B cell (primary cell): ENCODE measurements at regions of chr9 and their contacts with region 1.

Region 1: DNA sequence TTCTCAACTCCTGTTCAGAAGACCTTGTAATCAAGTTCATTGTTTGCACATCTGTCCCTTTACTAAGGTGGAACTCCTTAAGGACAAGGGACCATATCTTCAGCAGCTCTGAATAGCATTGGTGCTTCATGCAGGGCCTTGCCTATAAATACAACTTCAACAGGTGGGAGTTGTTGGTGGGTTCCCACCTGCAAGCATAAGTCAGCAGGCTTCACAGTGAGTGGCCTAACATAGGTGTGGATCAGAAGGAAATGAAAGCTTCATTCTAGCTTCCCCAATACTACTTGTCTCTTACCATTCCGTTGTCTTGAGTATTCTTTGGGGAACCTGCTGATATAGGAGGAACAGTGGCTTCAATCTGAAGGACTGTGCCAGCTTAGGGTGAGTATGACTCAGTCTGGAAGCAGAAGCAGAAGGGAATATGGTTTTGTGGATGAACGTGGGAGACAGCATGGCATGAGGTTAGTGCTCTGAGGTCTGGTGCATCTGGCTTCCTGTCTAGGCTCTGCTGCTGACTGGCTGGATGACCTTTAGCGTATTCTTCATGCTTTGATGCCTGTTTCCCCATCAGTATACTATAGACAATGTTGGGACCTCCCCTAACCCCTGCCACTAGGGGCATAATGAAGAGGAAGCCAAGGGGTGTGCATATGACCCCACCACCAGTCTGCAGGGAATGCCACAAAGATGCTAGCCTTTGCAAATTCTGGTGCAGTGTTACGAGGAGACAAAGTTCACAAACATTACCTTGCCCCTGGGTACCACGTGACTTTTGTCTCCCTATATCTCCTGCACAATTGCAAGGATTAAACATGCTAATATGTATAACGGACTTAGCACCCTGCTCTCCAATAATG is 192.3 kb downstream of the PALM2AKAP2 start:
- DNase-seq: peak; percentile 85
- ATAC-seq: peak; percentile 73
- H3K4me3 ChIP-seq: peak overlapping the region in 1 of 5 experiments; percentile 13
- H3K4me3 Mint-ChIP-seq: peak overlapping the region; percentile 76
- H3K27ac ChIP-seq: peak overlapping the region; percentile 90 to 93
- H3K27ac Mint-ChIP-seq: peak overlapping the region; percentile 98
- H3K4me1 ChIP-seq: peaks cover 99 to 100% of the 10 kb centered on the region in 2 donors
- H3K4me1 Mint-ChIP-seq: peaks cover 95% of the 10 kb centered on the region
- H3K27me3 ChIP-seq: no peaks in the 10 kb centered on the region
- H3K27me3 Mint-ChIP-seq: no peaks in the 10 kb centered on the region
- CTCF ChIP-seq: peak; percentile 68

Region 2: DNA sequence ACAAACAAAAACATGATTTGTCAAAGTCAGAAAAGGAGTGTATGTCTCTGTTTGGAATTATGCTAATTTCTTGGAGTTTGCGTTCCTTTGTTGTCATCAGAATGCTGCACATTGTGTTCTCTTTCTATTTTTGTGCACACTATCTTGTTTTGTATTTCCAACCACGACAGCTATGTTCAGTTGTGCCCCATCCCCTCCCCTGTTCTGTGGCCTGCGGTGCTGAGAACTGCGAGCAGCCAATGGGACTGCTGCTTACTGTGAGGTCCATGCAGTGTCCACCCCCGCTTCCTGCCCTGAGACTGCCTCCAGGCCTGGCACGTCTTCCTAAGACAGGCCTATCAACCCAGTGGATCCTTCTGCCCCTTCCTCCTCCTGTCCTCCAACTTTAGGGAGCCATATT is 115.5 kb before region 1 on chr9:
- CTCF ChIA-PET with region 1: no interaction called
- POLR2A ChIA-PET with region 1: no interaction called
- intact Hi-C with region 1: no loop called
- DNase-seq: no peak
- ATAC-seq: no peak
- H3K4me3 ChIP-seq: no peak overlapping the region
- H3K4me3 Mint-ChIP-seq: no peak overlapping the region
- H3K27ac ChIP-seq: no peak overlapping the region
- H3K27ac Mint-ChIP-seq: no peak overlapping the region
- H3K4me1 ChIP-seq: no peaks in the 10 kb centered on the region
- H3K4me1 Mint-ChIP-seq: no peaks in the 10 kb centered on the region
- H3K27me3 ChIP-seq: peaks cover 0 to 4% (median 0%) of the 10 kb centered on the region in 4 experiments
- H3K27me3 Mint-ChIP-seq: peaks cover 28% of the 10 kb centered on the region
- CTCF ChIP-seq: no peak

Region 3: GRCh38 chr9:109908459-109909390 is 63.5 kb before region 1 on chr9:
- CTCF ChIA-PET with region 1: interaction called, 138 read pairs
- POLR2A ChIA-PET with region 1: interaction called, 28 read pairs
- intact Hi-C with region 1: loop called (anchors 1 kb)
- DNase-seq: peak; percentile 60
- ATAC-seq: peak; percentile 61
- H3K4me3 ChIP-seq: no peak overlapping the region
- H3K4me3 Mint-ChIP-seq: no peak overlapping the region
- H3K27ac ChIP-seq: peak overlapping the region; percentile 65 to 69
- H3K27ac Mint-ChIP-seq: no peak overlapping the region
- H3K4me1 ChIP-seq: peaks cover 75 to 81% of the 10 kb centered on the region in 2 donors
- H3K4me1 Mint-ChIP-seq: peaks cover 7% of the 10 kb centered on the region
- H3K27me3 ChIP-seq: no peaks in the 10 kb centered on the region
- H3K27me3 Mint-ChIP-seq: no peaks in the 10 kb centered on the region
- CTCF ChIP-seq: no peak

Region 4: DNA sequence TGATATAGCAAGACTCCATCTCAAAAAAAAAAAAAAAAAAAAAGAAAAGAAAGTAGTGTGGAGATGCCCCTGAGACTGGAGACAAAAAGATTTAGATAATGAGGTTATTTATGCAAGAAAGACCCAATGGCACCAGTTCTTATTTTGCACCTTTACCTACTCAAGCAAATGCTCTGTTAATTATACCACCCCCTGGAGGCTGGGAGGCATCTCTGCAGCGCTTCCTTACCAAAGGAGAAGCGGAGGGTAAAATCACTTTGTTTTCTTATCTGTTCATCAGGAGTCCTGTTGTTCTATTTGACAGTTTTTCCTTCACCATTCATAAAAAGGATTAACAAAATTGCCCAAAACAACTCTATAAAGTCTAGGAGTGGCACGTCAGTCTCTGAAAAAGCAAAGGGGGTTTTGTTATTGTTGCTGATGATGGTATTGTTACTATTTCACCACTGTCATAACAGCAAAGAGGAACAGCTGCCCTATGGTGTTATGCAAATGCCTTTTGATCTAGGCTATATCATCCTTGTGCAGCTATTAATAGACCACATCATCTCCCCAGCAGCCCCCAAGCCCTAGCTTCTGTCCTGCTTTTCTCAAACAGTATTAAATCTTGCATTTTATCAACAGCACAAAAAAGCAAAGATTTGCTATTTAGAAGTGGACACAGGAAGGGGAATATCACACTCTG is 18.3 kb before region 1 on chr9:
- CTCF ChIA-PET with region 1: interaction called, 31 read pairs
- POLR2A ChIA-PET with region 1: interaction called, 7 read pairs
- intact Hi-C with region 1: loop called (anchors 2 kb)
- DNase-seq: peak; percentile 49
- ATAC-seq: peak; percentile 80
- H3K4me3 ChIP-seq: peak overlapping the region in 1 of 5 experiments; percentile 4
- H3K4me3 Mint-ChIP-seq: peak overlapping the region; percentile 59
- H3K27ac ChIP-seq: peak overlapping the region in 1 of 2 donors; percentile 73
- H3K27ac Mint-ChIP-seq: peak overlapping the region; percentile 86
- H3K4me1 ChIP-seq: peaks cover 38 to 42% of the 10 kb centered on the region in 2 donors
- H3K4me1 Mint-ChIP-seq: peaks cover 58% of the 10 kb centered on the region
- H3K27me3 ChIP-seq: no peaks in the 10 kb centered on the region
- H3K27me3 Mint-ChIP-seq: no peaks in the 10 kb centered on the region
- CTCF ChIP-seq: peak; percentile 57

Region 5: DNA sequence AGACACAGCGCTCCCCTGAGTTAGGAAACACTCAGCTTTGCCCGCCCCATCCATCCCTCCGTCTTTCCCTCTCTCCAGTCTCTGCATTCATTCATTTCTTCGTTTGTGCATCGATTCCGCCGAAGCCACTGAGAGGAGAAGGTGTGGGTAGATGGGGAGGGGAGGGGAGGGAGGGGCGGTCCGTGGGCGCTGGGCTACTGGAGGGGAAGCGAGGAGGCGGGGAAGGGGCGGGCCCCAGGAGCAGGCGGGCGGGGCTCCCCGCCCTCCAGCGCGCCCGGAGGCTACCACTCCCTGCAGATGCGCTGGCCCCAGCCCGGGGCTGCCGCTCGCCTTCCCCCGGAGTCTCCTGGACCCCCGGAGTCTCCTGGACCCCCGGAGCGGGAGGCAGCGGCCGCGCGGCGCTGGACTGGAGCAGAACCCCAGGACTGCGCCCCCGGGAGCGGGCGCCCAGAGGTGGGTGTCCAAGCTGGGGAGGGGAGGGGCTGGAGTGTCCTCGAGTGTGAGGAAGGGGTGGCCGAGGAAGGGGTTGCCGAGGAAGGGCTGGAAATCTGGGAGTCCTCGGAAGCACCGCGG is 76.2 kb after region 1 on chr9:
- CTCF ChIA-PET with region 1: interaction called, 17 read pairs
- POLR2A ChIA-PET with region 1: interaction called, 23 read pairs
- intact Hi-C with region 1: loop called (anchors 1 kb)
- DNase-seq: peak; percentile 91
- ATAC-seq: peak; percentile 95
- H3K4me3 ChIP-seq: peak overlapping the region; percentile 79 to 98 (median 88)
- H3K4me3 Mint-ChIP-seq: peak overlapping the region; percentile 98
- H3K27ac ChIP-seq: peak overlapping the region; percentile 40 to 71
- H3K27ac Mint-ChIP-seq: peak overlapping the region; percentile 93
- H3K4me1 ChIP-seq: peaks cover 42 to 47% of the 10 kb centered on the region in 2 donors
- H3K4me1 Mint-ChIP-seq: peaks cover 56% of the 10 kb centered on the region
- H3K27me3 ChIP-seq: no peaks in the 10 kb centered on the region
- H3K27me3 Mint-ChIP-seq: no peaks in the 10 kb centered on the region
- CTCF ChIP-seq: no peak

Region 6: DNA sequence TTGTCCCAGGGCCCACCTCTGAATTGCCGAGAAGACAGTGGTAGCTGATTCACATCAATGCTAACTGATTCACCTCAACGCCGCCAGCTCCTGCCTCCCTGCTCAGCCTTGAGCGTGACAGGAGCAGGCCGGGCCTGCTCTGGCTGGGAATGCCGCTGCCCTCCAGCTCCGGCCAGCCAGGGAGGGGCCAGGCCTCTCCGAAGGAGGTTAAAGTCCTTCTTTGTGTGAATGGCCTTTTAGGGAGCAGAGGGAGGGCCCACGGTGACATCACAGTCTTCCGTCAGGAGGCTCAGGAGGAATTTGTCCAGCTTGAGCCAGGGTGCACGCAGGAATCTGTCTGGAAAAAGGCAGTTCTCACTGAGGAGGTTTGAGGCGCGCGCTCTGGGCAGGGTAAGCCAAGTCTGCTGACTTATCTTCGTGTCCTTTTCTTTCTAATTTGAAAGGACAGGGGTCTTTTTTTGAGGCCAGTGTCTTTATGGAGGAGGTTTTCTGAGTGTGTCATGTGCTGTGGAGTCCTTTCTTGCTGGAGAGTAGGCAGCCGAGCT is 153.0 kb after region 1 on chr9:
- CTCF ChIA-PET with region 1: interaction called, 3 read pairs
- POLR2A ChIA-PET with region 1: interaction called, 3 read pairs
- intact Hi-C with region 1: loop called (anchors 5 kb)
- DNase-seq: no peak
- ATAC-seq: no peak
- H3K4me3 ChIP-seq: no peak overlapping the region
- H3K4me3 Mint-ChIP-seq: peak overlapping the region; percentile 71
- H3K27ac ChIP-seq: peak overlapping the region; percentile 90 to 94
- H3K27ac Mint-ChIP-seq: peak overlapping the region; percentile 89
- H3K4me1 ChIP-seq: peaks cover 84 to 92% of the 10 kb centered on the region in 2 donors
- H3K4me1 Mint-ChIP-seq: peaks cover 97% of the 10 kb centered on the region
- H3K27me3 ChIP-seq: no peaks in the 10 kb centered on the region
- H3K27me3 Mint-ChIP-seq: no peaks in the 10 kb centered on the region
- CTCF ChIP-seq: no peak

Region 7: DNA sequence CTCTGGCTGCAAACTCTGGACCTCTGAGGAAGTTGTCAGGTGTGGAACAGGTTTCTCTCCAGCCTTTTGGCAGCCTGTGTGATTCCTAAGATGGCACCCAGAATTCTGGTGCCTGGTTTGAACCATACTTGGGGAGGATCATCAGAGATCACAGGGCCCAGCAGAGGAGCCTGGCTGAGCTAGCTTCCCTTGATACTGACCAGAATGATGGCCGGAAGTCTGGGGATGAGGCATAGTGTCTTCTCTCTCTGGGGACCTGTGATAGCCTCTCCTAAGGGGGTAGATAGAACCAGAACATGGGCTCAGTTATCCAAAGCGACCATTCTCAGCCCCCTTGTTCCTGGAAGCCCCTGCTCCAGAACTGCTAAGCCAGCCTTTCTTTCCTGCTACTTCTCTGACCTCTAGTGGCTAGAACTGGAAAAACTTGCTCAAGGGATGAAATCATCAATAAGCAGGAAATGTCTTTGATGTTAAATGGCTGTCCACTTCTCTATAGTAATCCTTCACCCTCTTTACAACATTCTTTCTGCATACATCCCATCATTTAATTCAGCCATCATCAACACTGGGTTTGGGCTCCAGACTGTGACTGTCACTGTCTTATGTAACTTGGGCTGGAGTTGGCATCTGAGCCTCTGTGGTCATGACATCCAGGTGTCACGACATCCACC is 180.6 kb after region 1 on chr9:
- CTCF ChIA-PET with region 1: interaction called, 9 read pairs
- POLR2A ChIA-PET with region 1: interaction called, 3 read pairs
- intact Hi-C with region 1: loop called (anchors 2 kb)
- DNase-seq: peak; percentile 76
- ATAC-seq: peak; percentile 32
- H3K4me3 ChIP-seq: peak overlapping the region in 1 of 5 experiments; percentile 2
- H3K4me3 Mint-ChIP-seq: peak overlapping the region; percentile 51
- H3K27ac ChIP-seq: peak overlapping the region; percentile 54 to 90
- H3K27ac Mint-ChIP-seq: peak overlapping the region; percentile 84
- H3K4me1 ChIP-seq: peaks cover 92% of the 10 kb centered on the region in 2 donors
- H3K4me1 Mint-ChIP-seq: peaks cover 97% of the 10 kb centered on the region
- H3K27me3 ChIP-seq: no peaks in the 10 kb centered on the region
- H3K27me3 Mint-ChIP-seq: no peaks in the 10 kb centered on the region
- CTCF ChIP-seq: peak; percentile 80